ENCODE measurements at regions of chr2 and their contacts with region 1.

Region 1: DNA sequence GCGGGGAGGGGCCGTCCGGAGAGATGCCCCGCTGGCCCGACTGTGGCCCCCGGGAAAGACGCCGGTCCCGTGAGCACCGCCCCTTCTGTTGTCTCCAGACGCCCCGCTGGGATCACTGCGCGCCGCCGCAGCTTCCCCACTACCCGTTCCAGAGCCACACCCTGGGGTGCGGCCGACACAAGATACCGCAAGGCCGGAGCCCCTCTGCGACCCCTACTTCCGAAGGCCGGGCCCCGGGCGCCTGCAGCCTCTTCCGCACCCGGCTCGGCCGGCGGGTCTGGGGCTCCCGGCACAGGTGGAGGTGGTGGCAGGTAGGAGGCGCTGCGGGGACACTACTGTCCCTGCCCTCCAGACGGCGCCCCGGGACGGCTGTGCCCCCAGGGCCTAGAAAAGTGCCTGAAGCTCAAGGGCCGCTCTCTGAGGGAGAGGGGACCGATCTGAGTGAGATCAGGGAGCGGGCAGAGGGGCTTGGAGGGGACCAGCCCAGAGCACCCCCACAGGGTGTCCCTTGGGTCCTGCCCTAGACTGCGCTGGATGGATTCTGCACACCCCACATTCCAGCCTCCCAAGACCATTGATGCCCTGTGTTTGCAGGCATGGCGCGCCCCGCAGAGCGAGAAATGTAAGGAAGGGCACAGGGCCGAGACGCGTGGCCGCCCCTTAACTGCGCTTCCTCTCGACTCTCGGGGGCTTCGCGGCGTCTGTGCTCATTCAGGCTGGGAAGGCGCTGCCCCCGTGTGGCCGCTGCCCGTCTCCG is 80.0 kb downstream of the GFPT1 start:
- DNase-seq: peak; percentile 93
- H3K4me3 ChIP-seq: peak overlapping the region; percentile 59 to 60
- H3K27ac ChIP-seq: peak overlapping the region; percentile 38 to 60; a peak in 2 of 4 replicates
- H3K4me1 ChIP-seq: peaks cover 0 to 16% of the 10 kb centered on the region in 2 experiments; a peak in 1 of 4 replicates
- H3K27me3 ChIP-seq: no peaks in the 10 kb centered on the region
- CTCF ChIP-seq: peak; percentile 79
- EP300 ChIP-seq: no peak
- RAD21 ChIP-seq: peak; percentile 96

Region 2: GRCh38 chr2:68943581-68944568 is 363.1 kb before region 1 on chr2:
- CTCF ChIA-PET with region 1: interaction called, 70 read pairs
- POLR2A ChIA-PET with region 1: interaction called, 6 read pairs
- DNase-seq: peak; percentile 68
- H3K4me3 ChIP-seq: no peak overlapping the region
- H3K27ac ChIP-seq: no peak overlapping the region; a peak in 1 of 4 replicates
- H3K4me1 ChIP-seq: peaks cover 0 to 2% of the 10 kb centered on the region in 2 experiments; a peak in 1 of 4 replicates
- H3K27me3 ChIP-seq: no peaks in the 10 kb centered on the region
- CTCF ChIP-seq: peak; percentile 78
- EP300 ChIP-seq: no peak
- RAD21 ChIP-seq: peak; percentile 78

Region 3: GRCh38 chr2:69012310-69013141 is 294.5 kb before region 1 on chr2:
- CTCF ChIA-PET with region 1: interaction called, 107 read pairs
- POLR2A ChIA-PET with region 1: interaction called, 4 read pairs
- DNase-seq: peak; percentile 19
- H3K4me3 ChIP-seq: peak overlapping the region; percentile 85 to 98
- H3K27ac ChIP-seq: peak overlapping the region; percentile 89 to 92
- H3K4me1 ChIP-seq: peaks cover 13 to 27% of the 10 kb centered on the region in 2 experiments
- H3K27me3 ChIP-seq: no peaks in the 10 kb centered on the region
- CTCF ChIP-seq: peak; percentile 80
- EP300 ChIP-seq: no peak
- RAD21 ChIP-seq: peak; percentile 79

Region 4: DNA sequence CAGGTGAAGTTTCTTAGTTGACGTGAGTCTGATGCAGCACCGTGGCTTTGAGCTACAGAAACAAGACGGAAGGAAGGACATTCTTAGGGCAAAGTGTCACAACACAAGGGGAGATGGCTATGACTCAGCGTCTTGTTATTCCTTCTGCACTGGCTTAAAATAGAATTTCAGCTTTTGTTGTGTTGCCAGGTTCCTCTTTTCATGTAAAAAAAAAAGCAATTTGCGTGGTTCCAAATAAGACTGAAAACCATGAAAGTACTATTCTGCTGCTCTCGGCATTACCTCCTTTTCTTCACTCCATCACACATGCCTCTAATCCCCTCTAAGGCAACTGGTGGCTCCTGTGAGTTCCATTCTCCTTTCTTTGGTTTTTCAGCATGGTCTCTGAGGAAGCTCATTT is 143.9 kb before region 1 on chr2:
- CTCF ChIA-PET with region 1: interaction called, 27 read pairs
- POLR2A ChIA-PET with region 1: no interaction called
- DNase-seq: no peak
- H3K4me3 ChIP-seq: peak overlapping the region in 1 of 2 experiments; percentile 4; a peak in 1 of 4 replicates
- H3K27ac ChIP-seq: peak overlapping the region; percentile 97 to 98
- H3K4me1 ChIP-seq: peaks cover 33 to 57% of the 10 kb centered on the region in 2 experiments
- H3K27me3 ChIP-seq: no peaks in the 10 kb centered on the region
- CTCF ChIP-seq: no peak
- EP300 ChIP-seq: peak in 1 of 2 experiments; percentile 89; a peak in 2 of 4 replicates
- RAD21 ChIP-seq: no peak

Region 5: GRCh38 chr2:69216535-69217332 is 90.3 kb before region 1 on chr2:
- CTCF ChIA-PET with region 1: interaction called, 17 read pairs
- POLR2A ChIA-PET with region 1: no interaction called
- DNase-seq: peak; percentile 72
- H3K4me3 ChIP-seq: no peak overlapping the region
- H3K27ac ChIP-seq: peak overlapping the region; percentile 76 to 83
- H3K4me1 ChIP-seq: peaks cover 21 to 43% of the 10 kb centered on the region in 2 experiments; a peak in 3 of 4 replicates
- H3K27me3 ChIP-seq: no peaks in the 10 kb centered on the region
- CTCF ChIP-seq: no peak
- EP300 ChIP-seq: peak; percentile 94 to 95
- RAD21 ChIP-seq: peak; percentile 14

Measured in SK-N-SH (cell line).